ENCODE measurements at regions of chr3 and their contacts with region 1.

Region 1: GRCh38 chr3:18389108-18389733 is 35.9 kb downstream of the SATB1 start:
- DNase-seq: peak; percentile 10
- H3K4me3 ChIP-seq: no peak overlapping the region; a peak in 1 of 4 replicates
- H3K27ac ChIP-seq: peak overlapping the region in 1 of 2 experiments; percentile 75; a peak in 2 of 4 replicates
- H3K4me1 ChIP-seq: peaks cover 0 to 16% of the 10 kb centered on the region in 2 experiments; a peak in 2 of 4 replicates
- H3K27me3 ChIP-seq: no peaks in the 10 kb centered on the region
- CTCF ChIP-seq: peak; percentile 88
- EP300 ChIP-seq: no peak
- RAD21 ChIP-seq: peak; percentile 75

Region 2: DNA sequence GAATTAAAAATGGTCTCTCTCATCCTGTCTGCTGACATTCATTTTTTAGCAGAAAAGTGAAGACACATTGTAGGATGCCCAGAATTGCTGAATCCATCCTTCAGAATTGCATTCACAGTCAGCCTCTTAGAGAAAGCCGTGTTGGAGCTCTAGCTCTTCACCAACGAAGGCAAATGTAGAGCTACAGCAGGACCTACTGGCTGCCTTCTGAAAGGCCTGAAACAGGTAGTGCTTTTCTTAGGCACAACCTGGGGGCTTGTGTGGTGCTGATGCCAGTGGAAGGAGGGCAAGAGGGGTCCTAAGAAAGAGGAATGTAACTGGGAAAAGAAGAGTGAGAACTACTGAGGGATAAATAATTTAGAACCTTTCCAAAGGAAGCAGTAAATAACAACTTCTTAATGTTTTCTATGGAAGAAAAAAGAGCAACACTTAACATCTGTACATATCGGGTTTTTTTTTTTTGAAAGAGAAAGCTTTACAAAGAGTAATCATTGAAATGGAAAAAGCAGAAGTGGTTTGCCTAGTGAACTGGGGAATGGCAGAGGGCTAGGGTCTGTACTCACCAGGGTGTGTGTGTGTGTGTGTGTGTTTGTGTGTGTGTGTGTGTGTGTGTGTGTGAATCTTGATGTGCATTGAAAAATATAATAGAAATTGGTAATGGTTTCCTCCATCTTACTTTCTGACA is 261.9 kb before region 1 on chr3:
- CTCF ChIA-PET with region 1: interaction called, 11 read pairs
- POLR2A ChIA-PET with region 1: no interaction called
- DNase-seq: no peak
- H3K4me3 ChIP-seq: no peak overlapping the region
- H3K27ac ChIP-seq: peak overlapping the region in 1 of 2 experiments; percentile 98; a peak in 2 of 4 replicates
- H3K4me1 ChIP-seq: peaks cover 0 to 23% of the 10 kb centered on the region in 2 experiments; a peak in 3 of 4 replicates
- H3K27me3 ChIP-seq: no peaks in the 10 kb centered on the region
- CTCF ChIP-seq: no peak
- EP300 ChIP-seq: no peak
- RAD21 ChIP-seq: peak; percentile 47

Region 3: GRCh38 chr3:18378218-18378617 is 11.0 kb before region 1 on chr3:
- CTCF ChIA-PET with region 1: interaction called, 22 read pairs
- POLR2A ChIA-PET with region 1: no interaction called
- DNase-seq: no peak
- H3K4me3 ChIP-seq: no peak overlapping the region
- H3K27ac ChIP-seq: peak overlapping the region in 1 of 2 experiments; percentile 28; a peak in 1 of 4 replicates
- H3K4me1 ChIP-seq: peaks cover 0 to 6% of the 10 kb centered on the region in 2 experiments; a peak in 2 of 4 replicates
- H3K27me3 ChIP-seq: no peaks in the 10 kb centered on the region
- CTCF ChIP-seq: no peak
- EP300 ChIP-seq: peak in 1 of 2 experiments; percentile 44; a peak in 1 of 4 replicates
- RAD21 ChIP-seq: no peak

Region 4: GRCh38 chr3:18401300-18401961 is 12.2 kb after region 1 on chr3:
- CTCF ChIA-PET with region 1: interaction called, 10 read pairs
- POLR2A ChIA-PET with region 1: no interaction called
- DNase-seq: no peak
- H3K4me3 ChIP-seq: no peak overlapping the region
- H3K27ac ChIP-seq: no peak overlapping the region
- H3K4me1 ChIP-seq: peaks cover 0 to 2% of the 10 kb centered on the region in 2 experiments; a peak in 2 of 4 replicates
- H3K27me3 ChIP-seq: no peaks in the 10 kb centered on the region
- CTCF ChIP-seq: no peak
- EP300 ChIP-seq: no peak
- RAD21 ChIP-seq: no peak

Region 5: GRCh38 chr3:18466136-18466535 is 76.9 kb after region 1 on chr3:
- CTCF ChIA-PET with region 1: no interaction called
- POLR2A ChIA-PET with region 1: no interaction called
- DNase-seq: no peak
- H3K4me3 ChIP-seq: no peak overlapping the region
- H3K27ac ChIP-seq: no peak overlapping the region
- H3K4me1 ChIP-seq: no peaks in the 10 kb centered on the region
- H3K27me3 ChIP-seq: no peaks in the 10 kb centered on the region
- CTCF ChIP-seq: no peak
- EP300 ChIP-seq: no peak
- RAD21 ChIP-seq: no peak

Region 6: DNA sequence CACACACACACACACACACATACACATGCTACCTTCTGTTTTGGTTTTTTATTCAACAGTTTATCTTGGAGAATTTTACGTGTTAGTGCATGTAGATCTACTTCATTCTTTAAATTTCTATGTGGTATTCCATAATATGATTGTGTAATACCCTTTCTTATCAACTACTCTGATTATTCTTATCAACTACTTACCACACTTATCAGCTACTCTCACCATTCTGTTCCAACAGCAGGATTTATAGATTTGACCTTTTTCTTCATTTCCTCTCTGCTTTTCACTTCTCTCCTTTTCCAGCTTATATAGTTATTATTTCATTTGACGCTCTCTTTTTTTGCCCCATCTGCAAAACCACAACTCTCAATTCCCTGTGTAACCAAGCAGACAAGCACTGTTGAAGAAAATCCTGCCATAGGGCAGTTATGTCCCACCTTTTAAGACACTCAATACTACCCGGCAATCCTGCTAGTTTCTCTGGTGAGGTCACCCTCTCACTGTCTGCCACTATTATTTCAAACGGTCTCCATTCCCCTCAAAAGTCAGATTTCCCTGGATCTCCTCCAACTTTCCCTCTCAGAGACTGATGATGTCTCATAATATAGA is 92.8 kb after region 1 on chr3:
- CTCF ChIA-PET with region 1: no interaction called
- POLR2A ChIA-PET with region 1: no interaction called
- DNase-seq: no peak
- H3K4me3 ChIP-seq: no peak overlapping the region
- H3K27ac ChIP-seq: no peak overlapping the region
- H3K4me1 ChIP-seq: no peaks in the 10 kb centered on the region
- H3K27me3 ChIP-seq: no peaks in the 10 kb centered on the region
- CTCF ChIP-seq: no peak
- EP300 ChIP-seq: no peak
- RAD21 ChIP-seq: no peak